HCT116 (cell line): ENCODE measurements at regions of chr2 and their contacts with region 1.

Region 1: GRCh38 chr2:227106845-227107759 is 56.9 kb downstream of the COL4A4 start:
- DNase-seq: peak; percentile 55
- ATAC-seq: peak; percentile 94
- H3K4me3 ChIP-seq: no peak overlapping the region
- H3K27ac ChIP-seq: peak overlapping the region; percentile 23; the same call in 1 of the 2 replicates
- H3K4me1 ChIP-seq: peaks cover 0 to 7% of the 10 kb centered on the region in 2 experiments; a peak in 1 of 4 replicates
- H3K27me3 ChIP-seq: no peaks in the 10 kb centered on the region
- CTCF ChIP-seq: peak; percentile 83 to 96 (median 84)
- POLR2A ChIP-seq: no peak
- RAD21 ChIP-seq: peak; percentile 97

Region 2: DNA sequence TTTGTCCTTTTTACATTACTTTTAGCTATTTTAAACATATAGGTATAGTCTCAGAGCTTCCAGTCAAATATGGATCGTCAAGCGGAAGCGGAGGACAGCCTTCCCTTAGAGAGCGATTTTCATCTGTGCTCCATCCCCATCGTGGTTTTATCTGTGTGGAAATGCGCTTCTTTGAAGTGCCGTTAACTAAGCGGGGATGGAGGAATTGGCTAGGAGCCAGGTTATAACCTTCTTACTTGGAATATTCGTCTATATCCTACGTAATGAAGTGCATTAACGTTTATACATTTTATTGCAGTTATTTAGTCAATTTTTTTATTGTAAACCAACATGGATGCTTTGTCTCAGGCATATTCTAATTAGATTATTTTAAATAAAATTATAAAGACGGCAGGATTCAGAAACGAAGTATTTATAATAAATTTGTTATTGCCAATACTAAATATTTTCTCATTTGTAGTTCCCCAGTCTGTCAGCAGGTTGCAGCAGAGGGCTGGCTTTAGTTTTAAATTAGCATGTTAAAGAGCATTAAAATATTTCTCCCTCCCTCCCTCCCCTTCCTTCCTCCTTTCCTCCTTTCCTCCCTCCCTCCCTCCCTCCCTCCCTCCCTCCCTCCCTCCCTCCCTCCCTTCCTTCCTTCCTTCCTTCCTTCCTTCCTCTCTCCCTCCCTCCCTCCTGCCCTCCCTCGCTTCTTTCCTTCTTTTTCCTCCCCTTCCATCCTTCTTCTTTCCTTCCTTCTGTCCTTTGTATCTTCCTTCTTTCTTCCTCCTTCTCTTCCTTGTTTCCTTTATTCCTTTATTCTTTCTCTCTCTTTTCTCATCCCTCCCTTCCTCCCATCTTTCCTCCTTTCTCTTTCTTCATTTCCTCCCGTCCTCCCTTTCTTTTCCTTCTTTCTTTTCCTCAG is 1984.3 kb before region 1 on chr2:
- CTCF ChIA-PET with region 1: no interaction called
- POLR2A ChIA-PET with region 1: no interaction called
- RAD21 ChIA-PET with region 1: no interaction called
- intact Hi-C with region 1: loop called (anchors 5 kb)
- DNase-seq: no peak
- ATAC-seq: peak; percentile 60; the same call in 1 of the 2 replicates
- H3K4me3 ChIP-seq: no peak overlapping the region
- H3K27ac ChIP-seq: no peak overlapping the region
- H3K4me1 ChIP-seq: peaks cover 0 to 11% of the 10 kb centered on the region in 2 experiments; a peak in 2 of 4 replicates
- H3K27me3 ChIP-seq: no peaks in the 10 kb centered on the region
- CTCF ChIP-seq: peak in 2 of 3 experiments; percentile 38 to 39; a peak in 4 of 6 replicates
- POLR2A ChIP-seq: no peak
- RAD21 ChIP-seq: peak; percentile 62

Region 3: GRCh38 chr2:225668606-225669266 is 1438.4 kb before region 1 on chr2:
- CTCF ChIA-PET with region 1: interaction called, 8 read pairs
- POLR2A ChIA-PET with region 1: no interaction called
- RAD21 ChIA-PET with region 1: no interaction called
- intact Hi-C with region 1: loop called (anchors 1 kb)
- DNase-seq: peak; percentile 72
- ATAC-seq: peak; percentile 79
- H3K4me3 ChIP-seq: no peak overlapping the region
- H3K27ac ChIP-seq: peak overlapping the region; percentile 67; the same call in 1 of the 2 replicates
- H3K4me1 ChIP-seq: peaks cover 21 to 32% of the 10 kb centered on the region in 2 experiments
- H3K27me3 ChIP-seq: no peaks in the 10 kb centered on the region
- CTCF ChIP-seq: peak; percentile 74 to 91 (median 80)
- POLR2A ChIP-seq: no peak
- RAD21 ChIP-seq: peak; percentile 86

Region 4: DNA sequence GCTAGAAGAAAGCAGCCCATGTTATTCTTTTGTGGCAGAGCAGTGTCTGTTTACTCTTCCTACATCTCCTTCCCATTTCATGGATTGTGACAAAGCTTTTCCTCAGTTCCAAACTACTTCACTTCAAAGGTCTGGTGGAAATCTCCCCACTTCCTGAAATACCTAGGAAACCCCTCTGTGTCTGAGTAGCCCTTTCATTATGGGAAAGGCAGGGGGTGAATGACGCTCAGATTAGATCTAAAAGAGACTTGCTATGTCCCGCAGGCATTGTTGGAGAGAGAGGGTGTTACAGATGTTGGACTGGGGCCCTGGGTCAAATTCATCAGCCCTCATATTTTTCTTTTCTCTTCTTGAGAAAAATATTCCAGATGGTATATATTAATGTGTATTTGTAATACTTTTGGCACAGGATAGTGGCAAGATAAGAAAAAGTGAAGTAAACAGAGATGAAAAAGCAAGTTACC is 982.5 kb before region 1 on chr2:
- CTCF ChIA-PET with region 1: no interaction called
- POLR2A ChIA-PET with region 1: no interaction called
- RAD21 ChIA-PET with region 1: no interaction called
- intact Hi-C with region 1: loop called (anchors 10 kb)
- DNase-seq: peak; percentile 90
- ATAC-seq: peak; percentile 88
- H3K4me3 ChIP-seq: no peak overlapping the region
- H3K27ac ChIP-seq: peak overlapping the region; percentile 95
- H3K4me1 ChIP-seq: peaks cover 61 to 88% of the 10 kb centered on the region in 2 experiments
- H3K27me3 ChIP-seq: no peaks in the 10 kb centered on the region
- CTCF ChIP-seq: no peak
- POLR2A ChIP-seq: peak; percentile 6
- RAD21 ChIP-seq: peak; percentile 37; the same call in 1 of the 2 replicates

Region 5: GRCh38 chr2:226813148-226813701 is 293.9 kb before region 1 on chr2:
- CTCF ChIA-PET with region 1: no interaction called
- POLR2A ChIA-PET with region 1: no interaction called
- RAD21 ChIA-PET with region 1: no interaction called
- intact Hi-C with region 1: loop called (anchors 1 kb)
- DNase-seq: no peak
- ATAC-seq: peak; percentile 74
- H3K4me3 ChIP-seq: no peak overlapping the region
- H3K27ac ChIP-seq: no peak overlapping the region
- H3K4me1 ChIP-seq: no peaks in the 10 kb centered on the region
- H3K27me3 ChIP-seq: no peaks in the 10 kb centered on the region
- CTCF ChIP-seq: peak; percentile 49 to 64 (median 63); a peak in 5 of 6 replicates
- POLR2A ChIP-seq: no peak
- RAD21 ChIP-seq: peak; percentile 79

Region 6: DNA sequence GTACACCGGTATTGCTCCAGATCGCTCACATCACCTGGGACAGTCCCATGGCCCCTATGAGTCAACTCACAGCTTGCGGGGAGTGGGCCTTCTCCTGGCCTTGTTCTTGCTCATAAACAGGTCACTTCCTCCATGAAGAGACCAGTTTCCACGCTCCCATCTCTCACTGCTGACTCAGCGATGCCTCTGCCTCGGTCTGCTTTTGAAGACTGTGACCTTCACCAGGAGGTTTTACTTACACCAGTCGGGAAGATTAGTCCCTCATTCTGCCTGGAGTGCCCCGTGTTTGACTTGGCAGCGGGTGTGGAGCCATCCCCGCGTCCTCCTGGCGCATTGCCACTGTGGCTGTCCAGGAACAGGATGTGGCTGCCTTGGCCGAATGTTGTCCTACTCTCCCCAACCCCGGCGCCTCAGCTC is 111.5 kb before region 1 on chr2:
- CTCF ChIA-PET with region 1: no interaction called
- POLR2A ChIA-PET with region 1: no interaction called
- RAD21 ChIA-PET with region 1: no interaction called
- intact Hi-C with region 1: loop called (anchors 2 kb)
- DNase-seq: peak; percentile 99
- ATAC-seq: peak; percentile 90
- H3K4me3 ChIP-seq: peak overlapping the region in 1 of 2 experiments; percentile 24; a peak in 3 of 4 replicates
- H3K27ac ChIP-seq: peak overlapping the region; percentile 88
- H3K4me1 ChIP-seq: peaks cover 33 to 37% of the 10 kb centered on the region in 2 experiments
- H3K27me3 ChIP-seq: no peaks in the 10 kb centered on the region
- CTCF ChIP-seq: no peak
- POLR2A ChIP-seq: no peak
- RAD21 ChIP-seq: 0 out of 2 replicates have a peak, but pooled peaks have one; percentile 24